B cell (primary cell): ENCODE measurements at regions of chr15 and their contacts with region 1.

Region 1: DNA sequence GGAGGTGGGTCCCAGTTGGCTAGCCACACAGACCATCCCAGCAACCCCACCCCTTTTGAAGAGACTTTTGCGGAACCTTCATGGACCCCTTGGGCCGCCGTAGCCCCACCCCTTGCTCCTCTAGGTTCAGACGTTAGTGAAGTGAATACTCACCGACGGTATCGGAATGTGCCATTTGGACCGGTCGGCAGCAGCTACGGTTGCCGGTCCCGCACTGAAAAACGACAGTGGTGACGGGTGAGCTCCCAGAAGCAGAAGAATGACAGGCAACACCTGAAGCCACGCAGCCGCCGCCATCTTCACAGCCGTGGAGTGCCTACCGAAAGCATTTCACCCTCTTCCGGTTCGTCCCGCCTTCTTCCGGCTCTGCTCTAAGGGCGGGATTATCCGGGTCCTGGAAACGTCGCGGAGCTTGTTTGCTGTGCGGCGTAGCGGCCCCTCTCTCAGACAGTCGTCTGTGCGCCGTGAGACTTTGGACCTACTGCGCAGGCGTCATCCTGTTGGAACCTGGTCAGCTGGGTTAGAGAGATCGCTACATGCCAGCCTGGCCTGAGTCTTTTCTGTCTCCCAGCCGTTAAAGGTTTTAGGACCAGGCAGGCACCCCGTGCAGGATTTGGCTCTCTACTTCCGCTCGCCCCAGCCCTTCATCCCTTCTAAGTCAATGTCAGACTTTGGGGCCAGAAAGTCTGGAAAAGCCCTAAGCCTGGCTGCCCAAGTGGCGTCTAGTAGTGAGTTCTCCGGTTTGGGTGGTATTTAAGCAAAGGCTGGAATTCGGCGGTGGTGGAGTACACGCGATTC is at the starts of genes GANC and TMEM87A:
- DNase-seq: peak; percentile 97
- ATAC-seq: peak; percentile 87
- H3K4me3 ChIP-seq: peak within 1 kb of the TSS; percentile 88 to 100 (median 88)
- H3K4me3 Mint-ChIP-seq: peak within 1 kb of the TSS; percentile 90
- H3K27ac ChIP-seq: peak within 1 kb of the TSS; percentile 87 to 88
- H3K27ac Mint-ChIP-seq: peak within 1 kb of the TSS; percentile 99
- H3K4me1 ChIP-seq: peaks cover 26 to 28% of the 10 kb centered on the region in 2 donors
- H3K4me1 Mint-ChIP-seq: peaks cover 55% of the 10 kb centered on the region
- H3K27me3 ChIP-seq: no peaks in the 10 kb centered on the region
- H3K27me3 Mint-ChIP-seq: no peaks in the 10 kb centered on the region
- CTCF ChIP-seq: no peak
- total RNA-seq, gene GANC: 122 and 131 TPM in 2 replicates
- total RNA-seq, gene TMEM87A: 61.0 and 61.5 TPM in 2 replicates

Region 2: GRCh38 chr15:41827880-41828806 is 445.2 kb before region 1 on chr15 and contains the start of gene JMJD7:
- CTCF ChIA-PET with region 1: no interaction called
- POLR2A ChIA-PET with region 1: no interaction called
- intact Hi-C with region 1: loop called (anchors 5 kb)
- DNase-seq: peak; percentile 93
- ATAC-seq: peak; percentile 99
- H3K4me3 ChIP-seq: peak within 1 kb of the TSS; percentile 54 to 95 (median 87)
- H3K4me3 Mint-ChIP-seq: peak within 1 kb of the TSS; percentile 86
- H3K27ac ChIP-seq: peak within 1 kb of the TSS; percentile 32 to 53
- H3K27ac Mint-ChIP-seq: peak within 1 kb of the TSS; percentile 63
- H3K4me1 ChIP-seq: peaks cover 16 to 28% of the 10 kb centered on the region in 2 donors
- H3K4me1 Mint-ChIP-seq: peaks cover 26% of the 10 kb centered on the region
- H3K27me3 ChIP-seq: no peaks in the 10 kb centered on the region
- H3K27me3 Mint-ChIP-seq: no peaks in the 10 kb centered on the region
- CTCF ChIP-seq: no peak
- total RNA-seq, gene JMJD7: 41.1 and 43.9 TPM in 2 replicates

Region 3: DNA sequence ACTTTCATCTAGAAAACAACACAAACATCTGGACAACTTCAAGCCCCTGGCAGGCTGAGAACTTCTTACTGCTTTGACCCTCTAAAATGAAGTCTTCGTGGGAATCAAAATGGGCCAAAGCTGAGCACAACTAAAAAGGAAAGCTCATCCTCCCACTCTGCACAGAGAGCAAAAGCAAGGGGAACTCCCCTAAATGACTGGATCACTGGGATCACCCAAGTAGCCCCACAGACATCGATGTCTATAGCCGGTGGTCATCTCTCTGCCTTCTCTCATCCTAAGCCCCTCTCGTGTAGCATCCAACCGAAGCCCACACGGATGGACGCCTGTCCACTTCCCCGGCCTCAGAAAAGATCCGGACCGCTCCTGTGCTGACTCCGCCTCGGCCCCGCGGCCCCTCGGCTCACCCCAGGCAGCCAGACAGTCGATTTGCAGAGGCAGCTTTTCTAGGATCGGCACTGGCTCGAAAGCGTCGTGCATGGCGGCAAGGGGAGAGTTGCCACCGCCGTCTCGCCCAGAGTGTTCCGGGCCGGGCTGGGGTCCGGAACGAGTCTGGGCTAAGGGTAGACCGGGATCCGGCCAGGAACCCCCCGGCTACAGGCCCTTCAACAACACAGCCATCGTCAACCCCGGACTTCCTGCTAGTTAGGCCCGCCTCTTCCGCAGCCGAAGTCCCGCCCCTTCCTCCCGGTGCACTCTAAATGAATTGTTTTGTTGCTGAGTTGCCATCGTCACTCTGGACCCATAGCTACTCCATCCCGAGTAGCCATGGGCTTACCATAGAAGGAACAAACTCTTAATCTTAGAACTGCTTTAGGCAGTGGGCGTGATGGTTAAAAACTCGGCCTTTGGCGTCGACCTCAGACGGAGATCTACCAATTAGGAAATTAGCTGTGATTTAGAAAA is 65.4 kb before region 1 on chr15 and contains the start of gene VPS39:
- CTCF ChIA-PET with region 1: interaction called, 3 read pairs
- POLR2A ChIA-PET with region 1: no interaction called
- intact Hi-C with region 1: loop called (anchors 1 kb)
- DNase-seq: peak; percentile 86
- ATAC-seq: peak; percentile 97
- H3K4me3 ChIP-seq: peak within 1 kb of the TSS; percentile 83 to 97 (median 92)
- H3K4me3 Mint-ChIP-seq: peak within 1 kb of the TSS; percentile 85
- H3K27ac ChIP-seq: peak within 1 kb of the TSS; percentile 59 to 91
- H3K27ac Mint-ChIP-seq: peak within 1 kb of the TSS; percentile 91
- H3K4me1 ChIP-seq: peaks cover 20 to 22% of the 10 kb centered on the region in 2 donors
- H3K4me1 Mint-ChIP-seq: peaks cover 36% of the 10 kb centered on the region
- H3K27me3 ChIP-seq: no peaks in the 10 kb centered on the region
- H3K27me3 Mint-ChIP-seq: no peaks in the 10 kb centered on the region
- CTCF ChIP-seq: no peak
- total RNA-seq, gene VPS39: 145 and 149 TPM in 2 replicates

Region 4: DNA sequence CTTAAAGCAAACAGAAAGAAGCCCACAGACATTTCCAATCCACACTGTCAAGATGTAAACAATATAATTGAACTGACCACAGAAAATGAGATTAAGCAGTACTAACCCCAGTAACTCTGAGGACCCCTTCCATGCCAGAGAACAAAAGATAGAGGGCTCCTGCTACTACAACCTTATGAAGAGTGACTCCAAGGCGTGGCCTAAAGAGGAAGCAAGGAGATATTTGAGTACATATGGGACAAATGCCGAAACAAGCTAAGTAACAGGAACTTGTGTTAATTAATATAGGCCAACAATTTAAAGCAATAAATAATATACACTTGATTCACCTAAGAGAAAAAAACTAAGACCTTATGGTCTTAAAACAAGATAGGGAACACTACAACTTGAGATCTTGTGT is 40.2 kb before region 1 on chr15:
- CTCF ChIA-PET with region 1: no interaction called
- POLR2A ChIA-PET with region 1: no interaction called
- intact Hi-C with region 1: no loop called
- DNase-seq: no peak
- ATAC-seq: no peak
- H3K4me3 ChIP-seq: no peak overlapping the region
- H3K4me3 Mint-ChIP-seq: no peak overlapping the region
- H3K27ac ChIP-seq: no peak overlapping the region
- H3K27ac Mint-ChIP-seq: no peak overlapping the region
- H3K4me1 ChIP-seq: no peaks in the 10 kb centered on the region
- H3K4me1 Mint-ChIP-seq: no peaks in the 10 kb centered on the region
- H3K27me3 ChIP-seq: no peaks in the 10 kb centered on the region
- H3K27me3 Mint-ChIP-seq: no peaks in the 10 kb centered on the region
- CTCF ChIP-seq: no peak

Region 5: DNA sequence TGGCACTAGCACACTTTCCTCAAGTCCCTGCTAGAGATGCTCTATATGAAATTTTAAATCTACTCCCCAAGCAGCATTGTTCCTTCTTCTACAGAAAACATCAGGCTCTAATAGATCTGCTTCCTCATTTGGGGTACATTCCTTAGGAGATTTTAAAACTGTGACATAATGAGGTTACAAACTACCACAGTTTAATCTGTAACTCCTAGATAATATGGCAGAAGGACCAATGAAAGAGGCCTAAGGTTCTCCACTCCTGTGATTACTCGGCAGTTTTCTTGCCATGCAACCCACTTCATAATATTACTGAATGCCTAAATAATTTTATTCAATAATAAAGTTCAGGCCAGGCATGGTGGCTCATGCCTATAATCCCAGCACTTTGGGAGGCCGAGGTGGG is 201.5 kb after region 1 on chr15:
- CTCF ChIA-PET with region 1: no interaction called
- POLR2A ChIA-PET with region 1: no interaction called
- intact Hi-C with region 1: loop called (anchors 2 kb)
- DNase-seq: no peak
- ATAC-seq: no peak
- H3K4me3 ChIP-seq: no peak overlapping the region
- H3K4me3 Mint-ChIP-seq: no peak overlapping the region
- H3K27ac ChIP-seq: no peak overlapping the region
- H3K27ac Mint-ChIP-seq: peak overlapping the region; percentile 38
- H3K4me1 ChIP-seq: peaks cover 0 to 4% of the 10 kb centered on the region in 2 donors
- H3K4me1 Mint-ChIP-seq: peaks cover 36% of the 10 kb centered on the region
- H3K27me3 ChIP-seq: no peaks in the 10 kb centered on the region
- H3K27me3 Mint-ChIP-seq: no peaks in the 10 kb centered on the region
- CTCF ChIP-seq: no peak

Region 6: DNA sequence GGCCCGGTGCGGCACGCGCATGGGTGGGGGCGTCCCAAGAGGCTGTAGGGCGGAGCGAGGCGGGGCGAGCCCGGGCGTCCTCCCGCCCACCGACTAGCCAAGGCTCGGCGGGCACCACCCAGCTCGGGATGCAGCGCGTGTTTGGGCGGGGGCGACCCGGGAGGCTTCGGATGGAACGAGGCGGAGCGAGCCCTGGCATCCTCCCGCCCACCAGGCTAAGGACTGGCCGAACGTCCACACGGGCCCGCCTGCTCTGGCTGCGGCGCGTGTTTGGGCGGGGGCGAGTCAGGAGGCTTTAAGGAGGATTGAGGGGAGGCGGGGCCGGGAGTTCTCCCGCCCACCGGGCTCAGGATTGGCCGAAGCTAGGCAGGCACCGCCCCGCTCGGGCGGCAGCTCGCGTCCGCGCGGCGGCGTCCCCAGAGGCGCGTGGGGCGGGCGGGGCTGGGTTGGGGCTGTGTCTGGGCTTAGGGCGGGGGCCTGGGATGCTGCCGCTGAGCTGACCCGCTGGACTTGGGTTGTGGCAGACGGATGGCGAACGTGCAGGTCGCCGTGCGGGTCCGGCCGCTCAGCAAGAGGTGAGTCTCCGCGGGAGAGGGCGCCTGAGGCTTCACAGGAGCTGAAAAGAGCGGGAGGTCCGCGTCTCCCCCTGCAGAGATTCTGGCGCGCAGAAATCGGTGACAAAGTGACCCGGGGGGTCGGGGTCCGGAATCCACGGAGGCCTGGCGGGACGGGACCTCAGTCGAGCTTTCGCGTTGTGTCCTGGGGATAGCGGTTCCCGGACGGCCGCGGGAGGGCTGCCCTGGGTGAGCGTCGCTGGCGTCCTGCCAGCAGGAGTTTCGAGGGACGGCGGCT is 302.1 kb after region 1 on chr15 and contains the start of gene STARD9:
- CTCF ChIA-PET with region 1: no interaction called
- POLR2A ChIA-PET with region 1: interaction called, 9 read pairs
- intact Hi-C with region 1: loop called (anchors 10 kb)
- DNase-seq: peak; percentile 98
- ATAC-seq: peak; percentile 88
- H3K4me3 ChIP-seq: peak within 1 kb of the TSS; percentile 61 to 93 (median 88)
- H3K4me3 Mint-ChIP-seq: peak within 1 kb of the TSS; percentile 96
- H3K27ac ChIP-seq: peak within 1 kb of the TSS; percentile 67 to 69
- H3K27ac Mint-ChIP-seq: peak within 1 kb of the TSS; percentile 89
- H3K4me1 ChIP-seq: peaks cover 14 to 15% of the 10 kb centered on the region in 2 donors
- H3K4me1 Mint-ChIP-seq: peaks cover 19% of the 10 kb centered on the region
- H3K27me3 ChIP-seq: peaks cover 0 to 4% (median 0%) of the 10 kb centered on the region in 4 experiments
- H3K27me3 Mint-ChIP-seq: peaks cover 9% of the 10 kb centered on the region
- CTCF ChIP-seq: no peak
- total RNA-seq, gene STARD9: 20.8 and 23.1 TPM in 2 replicates